K562 (cell line): ENCODE measurements at regions of chr7 and their contacts with region 1.

Region 1: DNA sequence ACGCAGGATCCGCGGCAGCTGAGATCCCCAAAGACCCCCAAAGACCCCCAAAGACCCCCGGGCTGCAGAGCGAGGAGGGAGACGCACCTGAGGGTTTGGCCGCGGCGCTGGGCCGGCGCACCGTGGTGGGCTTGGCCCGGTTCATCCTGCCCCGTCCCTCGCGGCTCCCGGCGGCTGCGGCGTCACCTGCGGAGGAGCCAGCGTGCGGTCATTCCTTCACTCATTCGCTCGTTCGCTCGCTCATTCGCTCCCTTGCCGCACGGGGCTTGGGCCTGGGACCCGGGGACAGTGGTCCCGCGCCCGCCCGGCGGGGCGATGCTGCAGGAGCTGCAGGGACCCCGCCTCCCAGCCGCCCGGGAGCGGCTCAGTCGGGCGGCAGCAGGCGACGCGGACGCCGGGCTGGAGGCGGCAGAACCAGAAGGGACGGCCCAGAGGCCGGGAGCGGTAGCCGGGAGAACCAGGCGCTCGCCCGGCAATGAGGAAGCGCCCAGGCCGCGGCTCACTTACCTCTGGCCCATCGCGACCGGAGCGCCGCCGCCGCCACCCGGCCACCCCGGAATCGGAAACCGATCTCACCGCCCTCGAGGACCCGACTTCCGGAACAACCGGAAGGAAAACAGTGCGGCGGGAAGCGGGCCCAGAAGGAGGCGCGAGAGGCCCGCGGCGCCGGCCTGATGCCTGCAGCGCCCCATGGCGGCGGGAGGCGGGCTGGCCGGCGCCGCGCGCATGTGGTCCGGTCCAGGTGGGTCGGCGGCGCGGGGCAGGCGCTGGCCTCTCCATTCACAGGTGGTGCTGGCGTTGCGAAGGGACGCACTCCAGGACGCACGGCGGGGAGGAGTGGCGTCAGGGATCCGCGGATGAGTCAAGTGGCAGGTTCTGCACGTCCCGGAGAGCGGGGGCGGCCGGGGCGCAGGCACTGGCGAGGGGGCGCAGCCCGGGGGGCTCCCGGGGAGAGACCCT is at the start of gene INTS1:
- DNase-seq: peak; percentile 91 to 95 (median 92)
- ATAC-seq: peak; percentile 93
- H3K4me3 ChIP-seq: peak within 1 kb of the TSS; percentile 100
- H3K27ac ChIP-seq: peak within 1 kb of the TSS; percentile 79
- H3K4me1 ChIP-seq: peaks cover 16 to 67% of the 10 kb centered on the region in 2 experiments; a peak in 4 of 5 replicates
- H3K27me3 ChIP-seq: no peaks in the 10 kb centered on the region
- CTCF ChIP-seq: peak; percentile 78 to 99 (median 98)
- EP300 ChIP-seq: peak; percentile 39; the same call in 1 of the 2 replicates
- POLR2A ChIP-seq: peak; percentile 82
- RAD21 ChIP-seq: peak; percentile 55 to 68
- polyA plus RNA-seq, gene INTS1: 0.34 to 1.7 TPM

Region 2: GRCh38 chr7:1488016-1488415 is 16.1 kb before region 1 on chr7:
- CTCF ChIA-PET with region 1: no interaction called
- POLR2A ChIA-PET with region 1: no interaction called
- in situ Hi-C with region 1: no loop called
- intact Hi-C with region 1: no loop called
- DNase-seq: no peak
- ATAC-seq: no peak
- H3K4me3 ChIP-seq: no peak overlapping the region
- H3K27ac ChIP-seq: no peak overlapping the region
- H3K4me1 ChIP-seq: peaks cover 0 to 5% of the 10 kb centered on the region in 2 experiments; a peak in 1 of 5 replicates
- H3K27me3 ChIP-seq: no peaks in the 10 kb centered on the region
- CTCF ChIP-seq: no peak
- EP300 ChIP-seq: no peak
- POLR2A ChIP-seq: no peak
- RAD21 ChIP-seq: no peak

Region 3: GRCh38 chr7:1516586-1517251 is 12.6 kb after region 1 on chr7:
- CTCF ChIA-PET with region 1: no interaction called
- POLR2A ChIA-PET with region 1: no interaction called
- in situ Hi-C with region 1: no loop called
- intact Hi-C with region 1: no loop called
- DNase-seq: no peak
- ATAC-seq: no peak
- H3K4me3 ChIP-seq: no peak overlapping the region
- H3K27ac ChIP-seq: no peak overlapping the region
- H3K4me1 ChIP-seq: peaks cover 8 to 25% of the 10 kb centered on the region in 2 experiments
- H3K27me3 ChIP-seq: peaks cover 0 to 19% of the 10 kb centered on the region in 2 experiments; a peak in 3 of 5 replicates
- CTCF ChIP-seq: no peak
- EP300 ChIP-seq: no peak
- POLR2A ChIP-seq: no peak
- RAD21 ChIP-seq: no peak

Region 4: GRCh38 chr7:1529383-1530116 is 25.5 kb after region 1 on chr7:
- CTCF ChIA-PET with region 1: interaction called, 3 read pairs
- POLR2A ChIA-PET with region 1: interaction called, 5 read pairs
- in situ Hi-C with region 1: no loop called
- intact Hi-C with region 1: loop called (anchors 2 kb)
- DNase-seq: no peak
- ATAC-seq: no peak
- H3K4me3 ChIP-seq: no peak overlapping the region
- H3K27ac ChIP-seq: no peak overlapping the region
- H3K4me1 ChIP-seq: peaks cover 32 to 55% of the 10 kb centered on the region in 2 experiments
- H3K27me3 ChIP-seq: peaks cover 13 to 14% of the 10 kb centered on the region in 2 experiments; a peak in 4 of 5 replicates
- CTCF ChIP-seq: no peak
- EP300 ChIP-seq: no peak
- POLR2A ChIP-seq: no peak
- RAD21 ChIP-seq: no peak

Region 5: DNA sequence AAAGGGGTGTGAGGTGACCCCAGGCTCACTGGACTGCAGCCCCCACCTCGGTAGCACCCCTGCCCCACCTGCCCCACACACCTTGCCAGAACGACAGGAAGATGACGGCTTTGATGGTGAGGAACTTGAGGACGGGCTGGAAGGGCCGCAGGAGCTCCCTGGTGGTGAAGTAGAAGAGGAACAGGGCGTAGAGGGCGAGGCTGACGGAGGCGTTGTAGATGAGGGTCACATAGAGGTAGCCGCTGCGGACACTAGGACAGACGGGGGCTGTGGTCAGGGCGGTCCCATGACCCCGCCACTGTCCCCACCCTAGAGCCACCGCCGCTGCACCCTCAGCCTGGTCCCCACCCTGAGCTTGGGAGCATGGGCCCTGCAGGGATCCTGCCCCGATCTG is 44.3 kb after region 1 on chr7:
- CTCF ChIA-PET with region 1: interaction called, 33 read pairs
- POLR2A ChIA-PET with region 1: no interaction called
- in situ Hi-C with region 1: no loop called
- intact Hi-C with region 1: no loop called
- DNase-seq: peak; percentile 52 to 68 (median 60)
- ATAC-seq: peak; percentile 89
- H3K4me3 ChIP-seq: no peak overlapping the region
- H3K27ac ChIP-seq: no peak overlapping the region
- H3K4me1 ChIP-seq: peaks cover 0 to 73% of the 10 kb centered on the region in 2 experiments; a peak in 3 of 5 replicates
- H3K27me3 ChIP-seq: peaks cover 0 to 18% of the 10 kb centered on the region in 2 experiments; a peak in 2 of 5 replicates
- CTCF ChIP-seq: peak; percentile 57 to 85 (median 71)
- EP300 ChIP-seq: no peak
- POLR2A ChIP-seq: no peak
- RAD21 ChIP-seq: peak; percentile 52 to 73

Region 6: GRCh38 chr7:1555809-1556540 is 51.9 kb after region 1 on chr7 and contains the start of gene TMEM184A:
- CTCF ChIA-PET with region 1: interaction called, 9 read pairs
- POLR2A ChIA-PET with region 1: no interaction called
- in situ Hi-C with region 1: no loop called
- intact Hi-C with region 1: loop called (anchors 5 kb)
- DNase-seq: peak in 3 of 4 experiments; percentile 40 to 44 (median 43)
- ATAC-seq: peak; percentile 20
- H3K4me3 ChIP-seq: no peak within 1 kb of the TSS
- H3K27ac ChIP-seq: no peak within 1 kb of the TSS
- H3K4me1 ChIP-seq: peaks cover 0 to 66% of the 10 kb centered on the region in 2 experiments; a peak in 4 of 5 replicates
- H3K27me3 ChIP-seq: no peaks in the 10 kb centered on the region
- CTCF ChIP-seq: peak; percentile 34 to 65 (median 39); a peak in 5 of 6 replicates
- EP300 ChIP-seq: no peak
- POLR2A ChIP-seq: no peak
- RAD21 ChIP-seq: no peak
- polyA plus RNA-seq, gene TMEM184A: not detected

Region 7: GRCh38 chr7:1787241-1787640 is 283.1 kb after region 1 on chr7:
- CTCF ChIA-PET with region 1: no interaction called
- POLR2A ChIA-PET with region 1: no interaction called
- in situ Hi-C with region 1: no loop called
- intact Hi-C with region 1: no loop called
- DNase-seq: no peak
- ATAC-seq: no peak
- H3K4me3 ChIP-seq: no peak overlapping the region
- H3K27ac ChIP-seq: no peak overlapping the region
- H3K4me1 ChIP-seq: no peaks in the 10 kb centered on the region; a peak in 1 of 5 replicates
- H3K27me3 ChIP-seq: peaks cover 0 to 9% of the 10 kb centered on the region in 2 experiments; a peak in 2 of 5 replicates
- CTCF ChIP-seq: no peak
- EP300 ChIP-seq: no peak
- POLR2A ChIP-seq: no peak
- RAD21 ChIP-seq: no peak